Colonic mucosa (tissue), 4 donors: ENCODE measurements at regions of chr11 and their contacts with region 1.

Region 1: GRCh38 chr11:70755410-70756161 is 357.3 kb downstream of the CTTN start:
- DNase-seq: peak; percentile 75
- H3K4me3 ChIP-seq: no peak overlapping the region
- H3K27ac ChIP-seq: no peak overlapping the region
- H3K4me1 ChIP-seq: no peaks in the 10 kb centered on the region
- H3K27me3 ChIP-seq: no peaks in the 10 kb centered on the region
- CTCF ChIP-seq: peak; percentile 95

Region 2: DNA sequence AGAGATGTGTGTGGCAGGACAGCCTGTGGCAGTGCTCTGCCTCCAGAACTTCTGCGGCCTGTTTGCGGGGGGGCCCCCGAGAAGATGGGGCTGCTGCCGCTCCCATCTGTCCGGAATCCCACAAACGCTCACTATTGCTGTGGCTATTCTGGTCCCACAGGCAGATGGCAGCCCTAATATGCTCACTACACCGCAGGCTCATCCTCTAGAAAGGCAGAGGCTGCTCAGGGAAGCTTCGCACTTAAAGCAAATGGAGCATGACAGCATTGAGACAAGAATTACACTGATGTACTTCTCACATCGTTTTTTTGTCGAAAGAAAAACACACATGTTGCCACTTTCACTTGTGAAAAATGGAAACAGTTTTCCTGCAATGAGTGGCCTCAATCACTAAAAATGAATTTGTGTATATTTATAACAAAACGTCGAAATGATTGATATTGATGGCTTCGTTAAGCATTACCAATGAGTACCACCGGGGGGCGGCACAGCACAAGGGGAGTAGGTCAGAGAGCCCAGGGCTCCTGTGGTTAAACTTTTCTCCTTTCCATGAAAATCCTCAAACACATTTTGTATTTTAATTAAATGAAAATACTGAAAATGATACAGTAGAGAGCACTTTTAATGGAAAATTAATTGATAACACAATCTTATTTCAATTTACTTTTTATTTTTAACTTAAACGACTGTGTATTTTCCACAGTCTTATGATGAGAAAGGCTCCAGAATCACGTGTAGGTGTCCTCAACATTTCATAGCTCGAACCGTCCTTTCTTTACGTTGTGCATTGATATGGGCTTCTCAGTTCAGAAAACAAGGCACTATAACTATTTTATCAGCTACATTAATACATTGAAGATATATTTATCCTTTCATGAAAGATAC is 288.1 kb before region 1 on chr11:
- intact Hi-C with region 1: loop called (anchors 1 kb)
- DNase-seq: peak; percentile 71
- H3K4me3 ChIP-seq: no peak overlapping the region
- H3K27ac ChIP-seq: no peak overlapping the region
- H3K4me1 ChIP-seq: no peaks in the 10 kb centered on the region
- H3K27me3 ChIP-seq: no peaks in the 10 kb centered on the region
- CTCF ChIP-seq: peak; percentile 75